ENCODE measurements at regions of chr19 and their contacts with region 1.

Region 1: GRCh38 chr19:35013031-35013819 is 13.1 kb downstream of the GRAMD1A start:
- H3K4me3 ChIP-seq: no peak overlapping the region
- H3K27ac ChIP-seq: no peak overlapping the region
- H3K4me1 ChIP-seq: no peaks in the 10 kb centered on the region
- CTCF ChIP-seq: peak; percentile 93

Region 2: DNA sequence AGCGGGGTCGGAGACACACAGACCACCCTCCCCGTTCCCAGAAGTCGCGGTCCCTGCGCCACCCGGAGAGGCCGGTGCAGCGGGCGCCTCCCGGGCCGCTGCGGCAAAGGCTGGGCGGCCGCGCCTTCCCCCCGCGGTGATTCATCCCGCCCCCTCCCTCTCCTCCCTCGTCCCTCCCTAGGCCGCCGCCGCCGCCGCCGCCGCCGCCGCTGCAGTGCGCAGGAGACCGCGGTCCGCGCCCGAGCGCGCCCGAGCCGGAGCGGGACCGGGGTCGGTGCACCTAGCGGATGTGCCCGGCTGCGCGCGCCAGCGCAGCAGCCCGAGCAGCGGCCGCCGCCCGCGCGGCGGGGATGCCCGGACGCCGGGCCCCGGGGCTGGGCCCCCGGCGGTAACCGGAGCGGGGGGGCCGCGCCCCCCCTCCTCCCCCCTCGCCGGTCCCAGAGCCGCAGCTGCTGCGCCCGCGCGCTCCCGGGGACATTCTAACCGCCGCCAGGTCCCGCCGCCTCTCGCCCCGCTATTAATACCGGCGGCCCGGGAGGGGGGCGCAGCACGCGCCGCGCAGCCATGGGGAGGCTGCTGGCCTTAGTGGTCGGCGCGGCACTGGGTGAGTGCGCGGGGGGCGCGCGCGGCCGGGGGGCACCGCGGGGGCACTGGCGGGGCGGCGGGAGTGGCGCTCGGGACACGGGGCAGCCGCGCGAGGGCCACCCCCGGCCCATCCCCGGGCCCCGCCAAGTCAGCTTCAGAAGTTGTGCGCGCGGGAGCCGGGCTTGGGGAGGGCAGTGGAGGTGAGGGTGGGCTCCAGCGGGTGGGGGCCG is 17.2 kb after region 1 on chr19 and contains the start of gene SCN1B:
- CTCF ChIA-PET with region 1: interaction called, 9 read pairs
- POLR2A ChIA-PET with region 1: interaction called, 10 read pairs
- H3K4me3 ChIP-seq: peak within 1 kb of the TSS; percentile 42
- H3K27ac ChIP-seq: peak within 1 kb of the TSS; percentile 74; the same call in 1 of the 2 replicates
- H3K4me1 ChIP-seq: peaks cover 14% of the 10 kb centered on the region
- CTCF ChIP-seq: no peak